Panc1 (cell line): ENCODE measurements at regions of chr20 and their contacts with region 1.

Region 1: DNA sequence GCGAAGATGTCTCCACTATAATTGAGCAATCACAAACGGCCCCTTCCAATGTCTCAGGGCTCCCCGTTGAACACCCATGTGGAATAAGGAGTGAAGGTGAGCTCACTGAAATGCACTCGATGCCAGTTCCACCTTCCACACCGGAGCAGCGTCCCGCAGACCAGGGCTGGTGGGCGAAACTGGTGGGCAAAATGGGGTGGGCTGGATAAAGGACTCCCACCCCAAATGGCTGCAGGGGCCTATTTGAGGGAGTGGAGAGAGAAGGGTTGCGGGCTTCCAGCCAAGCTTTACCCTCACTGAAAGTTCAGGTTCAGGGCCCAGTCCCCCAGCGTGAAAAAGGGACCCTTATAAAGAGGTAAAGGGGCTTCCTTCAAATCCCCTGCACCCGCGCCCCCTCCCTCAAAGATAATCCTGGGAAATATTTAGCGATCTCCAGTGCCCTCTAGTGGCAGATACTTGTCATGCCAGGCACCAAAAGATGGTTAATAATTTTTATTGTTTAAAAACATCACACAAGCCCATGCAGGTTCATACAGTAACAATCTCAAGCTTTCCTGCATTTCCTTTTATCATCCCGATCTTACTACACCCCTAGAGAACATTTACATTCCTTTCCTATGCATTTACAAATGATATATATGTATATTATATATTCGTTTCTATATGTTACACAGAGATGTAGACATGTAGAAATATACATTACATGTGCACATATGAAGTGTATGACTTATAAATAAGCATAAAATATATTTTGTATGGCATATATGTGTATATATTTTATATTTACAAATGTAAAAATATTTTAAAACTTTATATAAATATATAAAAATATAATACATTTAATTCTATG is 58.2 kb upstream of the NKX2-2 start:
- DNase-seq: peak; percentile 10
- ATAC-seq: no peak; the same call in 1 of the 2 replicates
- H3K4me3 ChIP-seq: no peak overlapping the region
- H3K27ac ChIP-seq: no peak overlapping the region
- H3K4me1 ChIP-seq: no peaks in the 10 kb centered on the region
- H3K27me3 ChIP-seq: 0 out of 2 replicates have a peak, but pooled peaks cover 2% of the 10 kb centered on the region
- CTCF ChIP-seq: peak; percentile 90

Region 2: DNA sequence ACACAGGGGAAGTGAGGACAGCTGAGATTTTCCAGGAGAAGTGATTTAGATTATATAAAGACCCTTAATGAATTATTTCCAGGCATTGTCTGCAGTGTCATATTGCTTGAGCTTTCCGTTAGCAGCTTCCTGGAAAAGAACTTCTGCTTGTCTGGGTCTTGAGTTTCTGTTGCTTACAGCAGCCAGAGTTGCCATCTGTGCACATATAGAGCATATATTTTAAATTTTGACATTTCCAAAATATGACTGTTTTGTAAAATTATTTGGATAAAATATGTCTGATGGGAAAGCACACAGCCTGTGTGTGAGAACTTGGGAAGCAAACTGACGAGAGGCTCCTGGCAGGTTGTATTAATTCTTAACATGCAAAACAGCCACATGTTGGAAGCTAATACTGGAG is 37.2 kb before region 1 on chr20:
- CTCF ChIA-PET with region 1: no interaction called
- POLR2A ChIA-PET with region 1: no interaction called
- in situ Hi-C with region 1: no loop called
- intact Hi-C with region 1: loop called (anchors 5 kb)
- DNase-seq: no peak
- ATAC-seq: no peak
- H3K4me3 ChIP-seq: no peak overlapping the region
- H3K27ac ChIP-seq: no peak overlapping the region
- H3K4me1 ChIP-seq: no peaks in the 10 kb centered on the region
- H3K27me3 ChIP-seq: no peaks in the 10 kb centered on the region
- CTCF ChIP-seq: no peak

Region 3: DNA sequence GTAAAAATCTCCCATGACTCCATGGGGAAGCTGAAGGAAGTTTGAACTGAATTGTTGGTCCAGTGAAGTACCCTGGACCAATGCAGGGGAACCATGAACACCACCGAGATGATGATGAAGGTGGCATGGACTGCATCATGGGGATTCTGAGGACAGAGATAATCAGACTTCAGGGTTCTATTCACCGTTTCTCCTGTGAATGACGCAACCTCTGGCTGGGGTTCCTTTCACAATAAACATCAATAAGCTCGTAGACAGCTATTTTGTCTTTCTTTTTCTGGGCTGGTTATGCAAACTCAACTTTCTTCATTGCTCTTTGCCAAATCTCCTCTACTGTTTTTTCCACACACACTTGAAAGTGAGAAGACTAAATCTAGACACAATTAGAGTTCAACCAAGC is 29.7 kb after region 1 on chr20:
- CTCF ChIA-PET with region 1: interaction called, 11 read pairs
- POLR2A ChIA-PET with region 1: no interaction called
- in situ Hi-C with region 1: no loop called
- intact Hi-C with region 1: no loop called
- DNase-seq: no peak
- ATAC-seq: no peak
- H3K4me3 ChIP-seq: no peak overlapping the region
- H3K27ac ChIP-seq: no peak overlapping the region
- H3K4me1 ChIP-seq: no peaks in the 10 kb centered on the region
- H3K27me3 ChIP-seq: no peaks in the 10 kb centered on the region
- CTCF ChIP-seq: no peak